A549 (cell line): ENCODE measurements at regions of chr10 and their contacts with region 1.

Region 1: DNA sequence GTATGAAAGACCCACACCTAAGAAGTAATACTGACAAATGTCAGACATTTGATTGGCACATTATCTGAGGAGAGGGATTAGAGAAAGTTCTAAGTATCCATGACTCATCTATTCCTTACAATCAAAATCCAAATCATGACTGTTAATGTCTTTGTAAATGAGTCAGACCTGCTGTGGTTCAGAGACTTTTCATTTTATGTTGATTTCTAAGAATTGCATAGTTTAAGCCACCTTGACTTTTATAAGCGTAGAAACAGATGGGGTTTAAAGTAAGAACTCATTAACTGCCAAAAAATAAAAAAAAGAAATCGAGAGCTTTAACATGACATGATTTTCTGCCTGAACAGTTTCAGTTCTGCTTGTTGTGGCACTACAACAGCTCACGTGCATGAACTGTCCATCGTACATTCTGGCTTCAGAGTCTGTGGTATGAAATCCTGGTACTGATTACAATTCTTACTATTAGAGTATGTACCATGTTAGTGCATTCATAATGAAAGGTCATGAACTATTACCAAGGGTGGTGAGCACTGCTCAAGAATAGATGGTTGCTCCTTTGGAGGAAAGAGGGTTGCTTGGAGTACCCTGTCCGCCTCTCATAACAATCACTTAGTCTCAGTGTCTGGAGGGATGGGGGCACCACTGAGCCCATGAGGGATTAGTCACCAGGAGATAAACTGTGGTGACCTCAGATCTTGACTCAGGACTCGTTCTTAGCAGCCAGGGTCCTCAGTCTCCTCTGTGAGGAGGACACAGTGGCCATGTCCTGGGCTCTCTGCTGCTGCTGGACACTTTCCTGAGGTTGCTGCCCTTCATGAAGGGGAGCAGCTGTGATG is 42.2 kb downstream of the ACSM6 start:
- DNase-seq: no peak
- ATAC-seq: peak; percentile 55 to 56; a peak in 4 of 6 replicates
- H3K4me3 ChIP-seq: no peak overlapping the region
- H3K27ac ChIP-seq: peak overlapping the region; percentile 63 to 85
- H3K4me1 ChIP-seq: peaks cover 34% of the 10 kb centered on the region
- CTCF ChIP-seq: no peak
- EP300 ChIP-seq: no peak
- POLR2A ChIP-seq: no peak
- RAD21 ChIP-seq: no peak

Region 2: DNA sequence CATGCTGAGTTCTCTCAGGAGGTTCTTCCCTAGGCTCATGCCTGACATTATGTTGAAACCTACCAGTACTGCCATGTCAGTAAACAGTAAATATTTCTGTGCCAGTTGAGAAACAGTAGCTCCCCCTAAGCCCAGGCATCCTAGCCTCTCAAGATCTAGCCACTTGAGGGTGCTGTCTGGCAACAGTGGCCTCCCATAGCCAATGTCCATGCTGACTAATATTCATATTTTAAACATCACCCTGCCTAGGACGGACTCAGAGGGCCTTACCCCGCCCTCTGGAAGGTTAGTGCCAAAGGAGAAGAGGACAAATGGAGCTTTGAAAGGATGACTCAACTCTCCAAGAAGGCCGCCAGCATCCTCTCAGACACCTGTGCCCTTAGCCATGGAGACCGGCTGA is 34.5 kb before region 1 on chr10:
- CTCF ChIA-PET with region 1: interaction called, 23 read pairs
- POLR2A ChIA-PET with region 1: no interaction called
- DNase-seq: peak; percentile 60 to 71
- ATAC-seq: peak; percentile 95 to 99
- H3K4me3 ChIP-seq: no peak overlapping the region
- H3K27ac ChIP-seq: peak overlapping the region in 1 of 2 experiments; percentile 30; a peak in 1 of 6 replicates
- H3K4me1 ChIP-seq: no peaks in the 10 kb centered on the region
- CTCF ChIP-seq: peak; percentile 52
- EP300 ChIP-seq: no peak
- POLR2A ChIP-seq: no peak
- RAD21 ChIP-seq: peak; percentile 73 to 91